SK-N-SH (cell line): ENCODE measurements at regions of chr16 and their contacts with region 1.

Region 1: DNA sequence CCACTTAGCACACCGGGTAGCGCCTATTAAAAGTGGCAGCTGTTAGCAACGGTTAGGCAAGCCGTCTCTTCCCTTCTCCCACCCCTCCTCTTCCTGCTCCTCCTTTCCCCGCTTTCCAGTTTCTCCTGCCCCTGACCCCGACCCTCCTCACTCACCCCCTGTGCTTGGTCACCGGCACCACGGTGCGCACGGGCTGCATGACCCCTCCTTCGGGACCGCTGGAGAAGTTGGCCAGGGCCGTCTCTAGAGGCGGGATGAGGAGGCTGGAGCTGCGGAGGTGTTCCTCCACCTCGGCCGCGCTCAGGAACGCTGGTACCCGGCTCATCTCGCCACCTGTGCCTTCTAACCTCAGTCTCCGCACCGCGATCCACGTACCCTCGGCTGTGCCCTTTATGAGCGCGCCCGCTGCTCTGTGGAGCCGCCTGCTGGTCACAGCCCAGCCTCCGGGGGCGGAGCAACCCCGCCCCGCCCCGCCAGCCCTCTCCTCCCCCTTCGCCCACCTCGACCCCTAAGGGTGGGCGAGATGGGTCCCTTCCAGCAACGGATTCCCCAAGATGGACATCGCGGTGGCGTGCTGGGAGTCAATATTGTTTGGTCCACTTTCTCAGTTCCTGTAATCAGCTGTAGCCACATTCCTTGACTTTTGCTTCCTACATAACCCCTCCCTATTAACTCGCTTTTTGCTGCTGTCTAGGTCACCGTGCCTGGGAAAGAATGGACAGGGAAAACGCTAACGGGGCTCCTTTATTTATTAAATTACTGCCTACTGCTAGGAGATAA is at the start of gene CRYM:
- DNase-seq: peak; percentile 93
- H3K4me3 ChIP-seq: peak within 1 kb of the TSS; percentile 57 to 60
- H3K27ac ChIP-seq: no peak within 1 kb of the TSS
- H3K4me1 ChIP-seq: peaks cover 0 to 3% of the 10 kb centered on the region in 2 experiments; a peak in 1 of 4 replicates
- H3K27me3 ChIP-seq: peaks cover 20% of the 10 kb centered on the region; the same call in 1 of the 2 replicates
- CTCF ChIP-seq: peak; percentile 78
- EP300 ChIP-seq: no peak
- RAD21 ChIP-seq: peak; percentile 56
- polyA plus RNA-seq, gene CRYM: 1.0 and 1.8 TPM in 2 replicates

Region 2: DNA sequence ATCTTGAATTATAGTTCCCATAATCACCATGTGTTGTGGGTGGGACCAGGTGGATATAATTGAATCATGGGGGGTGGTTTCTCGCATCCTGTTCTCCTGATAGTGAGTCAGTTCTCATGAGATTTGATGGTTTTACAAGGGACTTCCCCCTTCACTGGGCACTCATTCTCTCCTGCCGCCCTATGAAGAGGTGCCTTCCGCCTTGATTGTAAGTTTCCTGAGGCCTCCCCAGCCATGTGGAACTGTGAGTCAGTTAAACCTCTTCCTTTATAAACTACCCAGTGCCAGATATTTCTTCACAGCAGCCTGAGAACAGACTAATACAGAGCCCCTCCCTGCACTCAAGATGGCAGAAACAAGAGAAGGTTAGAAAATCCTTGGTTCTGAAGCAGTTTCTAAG is 93.3 kb before region 1 on chr16:
- CTCF ChIA-PET with region 1: interaction called, 71 read pairs
- POLR2A ChIA-PET with region 1: no interaction called
- DNase-seq: no peak
- H3K4me3 ChIP-seq: no peak overlapping the region
- H3K27ac ChIP-seq: no peak overlapping the region
- H3K4me1 ChIP-seq: no peaks in the 10 kb centered on the region; a peak in 1 of 4 replicates
- H3K27me3 ChIP-seq: no peaks in the 10 kb centered on the region
- CTCF ChIP-seq: no peak
- EP300 ChIP-seq: no peak
- RAD21 ChIP-seq: no peak

Region 3: DNA sequence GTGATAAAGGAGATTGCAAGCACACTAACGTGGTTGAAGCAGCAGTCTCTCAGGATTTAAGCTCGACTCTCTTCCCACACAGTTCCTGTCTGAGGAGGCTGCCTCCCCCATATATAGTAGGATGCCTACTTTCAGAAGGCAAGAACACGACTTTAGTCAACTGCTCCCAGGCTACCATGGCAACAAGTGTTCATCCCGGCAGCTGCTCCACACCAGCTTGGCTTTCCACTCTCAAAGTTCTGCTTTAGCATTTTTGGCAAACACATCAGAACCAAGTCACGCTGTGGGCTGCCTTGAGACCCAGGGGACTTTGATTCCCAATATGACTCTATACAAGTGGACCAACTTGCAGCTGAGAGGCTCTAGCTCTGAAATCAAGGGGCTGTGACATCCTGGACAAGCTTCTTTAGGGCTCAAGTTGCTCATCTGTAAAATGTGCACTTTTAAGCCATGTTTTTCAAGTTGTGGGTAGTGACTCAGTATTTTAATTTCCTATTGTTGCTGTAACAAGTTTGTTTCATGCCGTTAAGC is 83.3 kb before region 1 on chr16:
- CTCF ChIA-PET with region 1: interaction called, 71 read pairs
- POLR2A ChIA-PET with region 1: no interaction called
- DNase-seq: no peak
- H3K4me3 ChIP-seq: no peak overlapping the region
- H3K27ac ChIP-seq: no peak overlapping the region
- H3K4me1 ChIP-seq: no peaks in the 10 kb centered on the region; a peak in 1 of 4 replicates
- H3K27me3 ChIP-seq: no peaks in the 10 kb centered on the region; the same call in 1 of the 2 replicates
- CTCF ChIP-seq: no peak
- EP300 ChIP-seq: no peak
- RAD21 ChIP-seq: no peak

Region 4: GRCh38 chr16:21263640-21264570 is 14.2 kb before region 1 on chr16:
- CTCF ChIA-PET with region 1: interaction called, 10 read pairs
- POLR2A ChIA-PET with region 1: no interaction called
- DNase-seq: peak; percentile 79
- H3K4me3 ChIP-seq: no peak overlapping the region
- H3K27ac ChIP-seq: peak overlapping the region in 1 of 2 experiments; percentile 82; a peak in 2 of 4 replicates
- H3K4me1 ChIP-seq: peaks cover 3 to 14% of the 10 kb centered on the region in 2 experiments; a peak in 2 of 4 replicates
- H3K27me3 ChIP-seq: no peaks in the 10 kb centered on the region
- CTCF ChIP-seq: no peak
- EP300 ChIP-seq: peak in 1 of 2 experiments; percentile 51; a peak in 1 of 4 replicates
- RAD21 ChIP-seq: peak; percentile 12

Region 5: GRCh38 chr16:21300309-21301167 is 22.4 kb after region 1 on chr16:
- CTCF ChIA-PET with region 1: interaction called, 71 read pairs
- POLR2A ChIA-PET with region 1: no interaction called
- DNase-seq: peak; percentile 86
- H3K4me3 ChIP-seq: peak overlapping the region; percentile 71 to 93
- H3K27ac ChIP-seq: peak overlapping the region; percentile 35 to 66; a peak in 3 of 4 replicates
- H3K4me1 ChIP-seq: peaks cover 0 to 4% of the 10 kb centered on the region in 2 experiments; a peak in 1 of 4 replicates
- H3K27me3 ChIP-seq: no peaks in the 10 kb centered on the region
- CTCF ChIP-seq: peak; percentile 98
- EP300 ChIP-seq: peak in 1 of 2 experiments; percentile 73; a peak in 3 of 4 replicates
- RAD21 ChIP-seq: peak; percentile 99

Region 6: DNA sequence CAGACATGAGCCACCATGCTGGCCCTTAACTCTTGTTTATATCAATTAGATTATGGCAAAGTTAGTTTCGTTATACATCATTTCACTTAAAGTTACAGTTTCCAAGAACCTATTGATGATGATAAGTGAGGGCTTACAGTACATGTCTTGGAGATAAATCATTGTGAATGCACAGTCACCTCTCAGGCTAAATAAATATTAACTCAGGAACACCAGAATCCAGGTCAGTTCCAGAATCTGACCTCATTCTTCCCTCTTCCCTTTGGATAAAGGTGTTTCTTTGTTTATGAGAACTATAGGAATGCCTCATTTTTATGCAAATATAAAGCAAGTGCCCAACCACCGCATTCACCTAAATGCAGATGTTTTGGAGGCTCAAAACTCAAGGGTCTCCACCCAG is 48.3 kb after region 1 on chr16:
- CTCF ChIA-PET with region 1: no interaction called
- POLR2A ChIA-PET with region 1: no interaction called
- DNase-seq: no peak
- H3K4me3 ChIP-seq: no peak overlapping the region
- H3K27ac ChIP-seq: no peak overlapping the region
- H3K4me1 ChIP-seq: no peaks in the 10 kb centered on the region
- H3K27me3 ChIP-seq: no peaks in the 10 kb centered on the region
- CTCF ChIP-seq: no peak
- EP300 ChIP-seq: no peak
- RAD21 ChIP-seq: no peak

Region 7: DNA sequence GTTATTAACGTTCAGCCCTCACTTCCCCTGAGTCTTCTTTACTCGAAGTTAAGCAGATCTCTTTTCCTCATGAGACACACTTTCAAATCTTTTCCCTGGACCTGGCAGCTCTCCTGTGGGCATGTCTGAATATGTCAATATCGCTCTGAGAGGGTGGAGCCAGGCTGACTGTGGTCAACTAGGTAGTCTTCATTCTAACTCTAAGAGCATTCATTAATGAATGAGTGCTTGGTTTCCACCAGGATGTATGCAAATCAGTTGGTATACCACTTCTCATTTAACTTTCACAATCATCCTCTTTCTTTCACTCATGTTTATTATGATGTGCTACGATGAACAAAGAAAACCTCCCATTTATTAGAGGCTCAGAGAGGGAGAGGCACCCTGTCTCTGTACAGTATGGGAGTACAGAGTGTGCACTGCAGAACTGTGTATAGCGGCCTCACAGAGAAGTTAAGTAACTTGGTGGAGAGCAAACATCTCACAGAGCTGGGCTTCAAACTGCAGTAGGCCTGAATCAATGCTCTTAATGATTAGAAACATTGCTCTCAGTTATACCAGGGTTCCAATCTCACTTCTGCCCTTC is 425.6 kb after region 1 on chr16:
- CTCF ChIA-PET with region 1: no interaction called
- POLR2A ChIA-PET with region 1: no interaction called
- DNase-seq: no peak
- H3K4me3 ChIP-seq: no peak overlapping the region
- H3K27ac ChIP-seq: no peak overlapping the region
- H3K4me1 ChIP-seq: no peaks in the 10 kb centered on the region; a peak in 1 of 4 replicates
- H3K27me3 ChIP-seq: no peaks in the 10 kb centered on the region
- CTCF ChIP-seq: no peak
- EP300 ChIP-seq: no peak
- RAD21 ChIP-seq: no peak